A673 (cell line): ENCODE measurements at regions of chr19 and their contacts with region 1.

Region 1: GRCh38 chr19:8580710-8581281 is 3.6 kb upstream of the MYO1F start:
- DNase-seq: peak; percentile 86
- H3K4me3 ChIP-seq: no peak overlapping the region
- H3K27ac ChIP-seq: no peak overlapping the region
- H3K4me1 ChIP-seq: peaks cover 9% of the 10 kb centered on the region
- H3K27me3 ChIP-seq: no peaks in the 10 kb centered on the region
- CTCF ChIP-seq: peak; percentile 99

Region 2: DNA sequence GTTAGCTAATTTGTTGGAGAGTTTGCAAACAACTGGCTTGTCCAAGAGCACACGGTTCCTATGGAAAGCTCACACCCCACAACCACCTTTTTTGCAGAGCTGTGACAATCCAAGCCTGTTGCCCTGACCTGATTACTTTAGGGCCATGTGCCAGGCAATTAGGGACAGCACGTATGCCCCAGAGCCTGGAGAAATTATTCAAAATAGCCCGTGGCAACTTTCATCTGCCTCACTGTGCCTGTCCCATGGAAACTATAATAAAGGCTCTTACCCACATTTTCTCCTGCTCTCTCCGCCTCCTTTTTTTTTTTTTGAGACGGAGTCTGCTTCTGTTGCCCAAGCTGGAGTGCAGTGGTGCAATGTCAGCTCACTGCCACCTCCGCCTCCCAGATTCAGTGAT is 412.8 kb before region 1 on chr19:
- CTCF ChIA-PET with region 1: no interaction called
- POLR2A ChIA-PET with region 1: no interaction called
- intact Hi-C with region 1: no loop called
- DNase-seq: no peak
- H3K4me3 ChIP-seq: no peak overlapping the region
- H3K27ac ChIP-seq: no peak overlapping the region
- H3K4me1 ChIP-seq: no peaks in the 10 kb centered on the region
- H3K27me3 ChIP-seq: no peaks in the 10 kb centered on the region
- CTCF ChIP-seq: no peak

Region 3: GRCh38 chr19:8505680-8506401 is 75.0 kb before region 1 on chr19:
- CTCF ChIA-PET with region 1: interaction called, 11 read pairs
- POLR2A ChIA-PET with region 1: no interaction called
- intact Hi-C with region 1: no loop called
- DNase-seq: peak; percentile 85
- H3K4me3 ChIP-seq: peak overlapping the region; percentile 62
- H3K27ac ChIP-seq: peak overlapping the region; percentile 78
- H3K4me1 ChIP-seq: peaks cover 11% of the 10 kb centered on the region
- H3K27me3 ChIP-seq: no peaks in the 10 kb centered on the region
- CTCF ChIP-seq: peak; percentile 90

Region 4: DNA sequence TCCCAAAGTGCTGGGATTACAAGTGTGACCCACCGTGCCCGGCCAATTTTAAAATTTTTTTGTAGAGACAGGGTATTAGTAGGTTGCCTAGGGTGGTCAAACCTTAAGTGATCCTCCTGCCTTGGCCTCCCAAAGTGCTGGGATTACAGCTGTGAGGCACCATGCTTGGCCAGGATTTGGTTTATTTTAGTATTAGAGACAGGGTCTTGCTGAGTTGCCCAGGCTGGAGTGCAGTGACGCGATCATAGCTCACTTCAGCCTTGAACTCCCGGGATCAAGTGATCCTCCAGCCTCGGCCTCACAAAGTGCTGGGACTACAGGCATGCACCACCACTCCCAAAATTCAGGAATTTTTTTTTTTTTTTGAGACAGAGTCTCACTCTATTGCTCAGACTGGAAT is 61.4 kb before region 1 on chr19:
- CTCF ChIA-PET with region 1: no interaction called
- POLR2A ChIA-PET with region 1: no interaction called
- intact Hi-C with region 1: no loop called
- DNase-seq: no peak
- H3K4me3 ChIP-seq: no peak overlapping the region
- H3K27ac ChIP-seq: no peak overlapping the region
- H3K4me1 ChIP-seq: no peaks in the 10 kb centered on the region
- H3K27me3 ChIP-seq: no peaks in the 10 kb centered on the region
- CTCF ChIP-seq: no peak

Region 5: DNA sequence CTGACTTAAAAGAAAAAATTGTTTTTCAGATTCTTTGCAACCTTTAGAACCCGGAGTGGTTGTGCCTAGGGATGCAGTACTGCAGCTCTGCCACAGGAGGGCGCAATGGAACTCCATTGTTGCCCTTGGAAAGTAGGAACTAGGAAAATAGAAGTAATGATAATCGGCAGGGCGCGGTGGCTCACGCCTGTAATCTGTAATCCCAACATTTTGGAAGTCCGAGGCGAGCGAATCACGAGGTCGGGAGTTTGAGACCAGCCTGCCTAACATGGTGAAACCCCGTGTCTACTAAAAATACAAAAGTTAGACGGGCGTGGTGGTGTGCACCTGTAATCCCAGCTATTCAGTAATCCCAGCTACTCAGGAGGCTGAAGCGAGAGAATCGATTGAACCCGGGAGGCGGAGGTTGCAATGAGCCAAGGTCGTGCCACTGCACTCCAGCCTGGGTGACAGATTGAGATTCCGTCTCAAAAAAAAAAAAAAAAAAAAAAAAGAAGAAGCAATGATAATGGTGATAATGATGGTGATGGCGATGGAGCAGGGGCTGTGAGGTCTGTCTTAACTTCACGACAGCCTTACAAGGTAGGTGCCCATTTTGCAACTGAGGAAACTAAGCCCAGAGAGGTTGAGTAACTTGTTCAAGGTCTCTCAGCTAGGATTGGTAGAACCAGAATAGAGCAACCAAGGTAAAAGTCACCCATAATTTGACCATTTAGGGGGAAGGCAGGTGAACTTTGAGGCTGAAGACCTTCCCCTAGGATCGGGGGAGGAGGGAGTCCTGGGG is 35.2 kb after region 1 on chr19:
- CTCF ChIA-PET with region 1: interaction called, 10 read pairs
- POLR2A ChIA-PET with region 1: no interaction called
- intact Hi-C with region 1: no loop called
- DNase-seq: peak; percentile 81
- H3K4me3 ChIP-seq: no peak overlapping the region
- H3K27ac ChIP-seq: no peak overlapping the region
- H3K4me1 ChIP-seq: peaks cover 10% of the 10 kb centered on the region
- H3K27me3 ChIP-seq: no peaks in the 10 kb centered on the region
- CTCF ChIP-seq: peak; percentile 97

Region 6: DNA sequence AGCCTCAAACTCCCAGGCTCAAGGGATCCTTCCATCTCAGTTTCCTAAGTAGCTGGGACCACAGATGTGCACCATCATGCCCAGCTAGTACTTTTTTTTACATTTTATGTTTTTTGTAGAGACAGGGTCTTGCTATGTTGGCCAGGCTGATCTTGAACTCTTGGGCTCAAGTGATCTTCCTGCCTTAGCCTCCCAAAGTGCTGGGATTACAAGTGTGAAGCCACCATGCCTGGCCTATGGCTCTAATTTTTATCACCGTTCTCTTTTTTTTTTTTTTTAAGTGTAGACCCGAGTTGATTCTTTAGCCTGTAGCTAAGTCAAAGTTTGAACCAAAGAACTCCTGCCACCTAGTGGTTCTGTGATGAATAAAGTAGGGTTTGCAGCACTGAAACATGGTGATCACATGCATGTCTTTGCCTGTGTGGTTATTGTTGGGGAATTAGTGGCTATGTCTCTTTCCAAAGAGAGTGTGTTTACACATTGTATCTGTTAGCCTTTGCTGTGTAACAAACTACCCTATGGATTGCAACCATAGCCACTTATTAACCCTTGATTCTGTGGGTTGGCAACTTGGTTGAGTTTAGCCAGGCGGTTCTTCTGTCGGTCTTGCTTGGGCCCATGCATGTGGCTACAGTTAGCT is 61.2 kb after region 1 on chr19:
- CTCF ChIA-PET with region 1: interaction called, 23 read pairs
- POLR2A ChIA-PET with region 1: no interaction called
- intact Hi-C with region 1: no loop called
- DNase-seq: peak; percentile 76
- H3K4me3 ChIP-seq: no peak overlapping the region
- H3K27ac ChIP-seq: no peak overlapping the region
- H3K4me1 ChIP-seq: peaks cover 24% of the 10 kb centered on the region
- H3K27me3 ChIP-seq: no peaks in the 10 kb centered on the region
- CTCF ChIP-seq: peak; percentile 76

Region 7: GRCh38 chr19:8697671-8698432 is 117.1 kb after region 1 on chr19:
- CTCF ChIA-PET with region 1: interaction called, 14 read pairs
- POLR2A ChIA-PET with region 1: no interaction called
- intact Hi-C with region 1: no loop called
- DNase-seq: no peak
- H3K4me3 ChIP-seq: no peak overlapping the region
- H3K27ac ChIP-seq: no peak overlapping the region
- H3K4me1 ChIP-seq: peaks cover 6% of the 10 kb centered on the region
- H3K27me3 ChIP-seq: no peaks in the 10 kb centered on the region
- CTCF ChIP-seq: peak; percentile 58